OCI-LY7 (cell line): ENCODE measurements at regions of chr9 and their contacts with region 1.

Region 1: GRCh38 chr9:128902351-128903078 is 18.3 kb upstream of the PHYHD1 start:
- DNase-seq: peak; percentile 91
- H3K4me3 ChIP-seq: peak overlapping the region; percentile 44
- H3K27ac ChIP-seq: peak overlapping the region; percentile 85
- H3K4me1 ChIP-seq: peaks cover 39% of the 10 kb centered on the region
- CTCF ChIP-seq: no peak

Region 2: GRCh38 chr9:128921881-128922763 is 19.6 kb after region 1 on chr9:
- CTCF ChIA-PET with region 1: no interaction called
- POLR2A ChIA-PET with region 1: interaction called, 4 read pairs
- intact Hi-C with region 1: loop called (anchors 1 kb)
- DNase-seq: peak; percentile 86
- H3K4me3 ChIP-seq: peak overlapping the region; percentile 79
- H3K27ac ChIP-seq: peak overlapping the region; percentile 98
- H3K4me1 ChIP-seq: peaks cover 37% of the 10 kb centered on the region
- CTCF ChIP-seq: no peak